Activated CD8-positive, alpha-beta T cell treated with anti-CD3 and anti-CD28 coated beads for 36 hours (primary cell): ENCODE measurements at regions of chr17 and their contacts with region 1.

Region 1: GRCh38 chr17:48756830-48757251 is 28.3 kb upstream of the HOXB13 start:
- DNase-seq: no peak
- ATAC-seq: no peak
- H3K4me3 Mint-ChIP-seq: no peak overlapping the region
- H3K27ac Mint-ChIP-seq: no peak overlapping the region
- H3K4me1 Mint-ChIP-seq: peaks cover 2% of the 10 kb centered on the region
- H3K27me3 Mint-ChIP-seq: peaks cover 74% of the 10 kb centered on the region
- CTCF ChIP-seq: no peak

Region 2: GRCh38 chr17:48718761-48719641 is 37.8 kb before region 1 on chr17:
- CTCF ChIA-PET with region 1: interaction called, 32 read pairs
- POLR2A ChIA-PET with region 1: interaction called, 3 read pairs
- intact Hi-C with region 1: loop called (anchors 5 kb)
- DNase-seq: no peak
- ATAC-seq: peak; percentile 27
- H3K4me3 Mint-ChIP-seq: peak overlapping the region; percentile 3
- H3K27ac Mint-ChIP-seq: no peak overlapping the region
- H3K4me1 Mint-ChIP-seq: peaks cover 22% of the 10 kb centered on the region
- H3K27me3 Mint-ChIP-seq: peaks cover 74% of the 10 kb centered on the region
- CTCF ChIP-seq: no peak